WTC11 (cell line): ENCODE measurements at regions of chr11 and their contacts with region 1.

Region 1: GRCh38 chr11:77547863-77548551 is 41.7 kb upstream of the AQP11 start:
- DNase-seq: peak; percentile 40
- ATAC-seq: peak; percentile 98
- H3K4me3 Mint-ChIP-seq: peak overlapping the region; percentile 47
- H3K27ac Mint-ChIP-seq: peak overlapping the region; percentile 98
- H3K4me1 Mint-ChIP-seq: peaks cover 20% of the 10 kb centered on the region
- H3K27me3 Mint-ChIP-seq: no peaks in the 10 kb centered on the region
- CTCF ChIP-seq: peak; percentile 48

Region 2: DNA sequence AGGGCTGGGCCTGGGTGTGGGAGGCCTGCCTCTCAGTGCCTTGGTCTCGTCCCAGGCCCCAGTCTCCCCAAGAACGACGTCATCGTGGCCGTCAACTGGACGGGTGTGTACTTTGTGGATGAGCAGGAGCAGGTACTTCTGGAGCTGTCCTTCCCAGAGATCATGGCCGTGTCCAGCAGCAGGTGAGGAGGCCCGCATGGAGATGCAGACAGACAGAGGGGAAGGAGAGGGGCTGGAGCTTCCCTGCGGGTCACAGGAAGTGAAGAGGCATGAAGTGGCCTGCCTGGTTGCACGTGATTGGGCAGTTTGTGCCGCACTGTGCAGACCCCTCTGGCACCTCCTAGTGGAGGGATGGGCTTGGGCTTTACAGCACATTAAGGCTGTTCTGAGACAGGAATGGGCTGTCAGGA is 349.6 kb before region 1 on chr11:
- CTCF ChIA-PET with region 1: interaction called, 14 read pairs
- POLR2A ChIA-PET with region 1: no interaction called
- DNase-seq: peak; percentile 82
- ATAC-seq: peak; percentile 90
- H3K4me3 Mint-ChIP-seq: no peak overlapping the region
- H3K27ac Mint-ChIP-seq: 0 out of 2 replicates have a peak overlapping the region, but pooled peaks have one; percentile 47
- H3K4me1 Mint-ChIP-seq: peaks cover 5% of the 10 kb centered on the region
- H3K27me3 Mint-ChIP-seq: no peaks in the 10 kb centered on the region
- CTCF ChIP-seq: peak; percentile 39

Region 3: DNA sequence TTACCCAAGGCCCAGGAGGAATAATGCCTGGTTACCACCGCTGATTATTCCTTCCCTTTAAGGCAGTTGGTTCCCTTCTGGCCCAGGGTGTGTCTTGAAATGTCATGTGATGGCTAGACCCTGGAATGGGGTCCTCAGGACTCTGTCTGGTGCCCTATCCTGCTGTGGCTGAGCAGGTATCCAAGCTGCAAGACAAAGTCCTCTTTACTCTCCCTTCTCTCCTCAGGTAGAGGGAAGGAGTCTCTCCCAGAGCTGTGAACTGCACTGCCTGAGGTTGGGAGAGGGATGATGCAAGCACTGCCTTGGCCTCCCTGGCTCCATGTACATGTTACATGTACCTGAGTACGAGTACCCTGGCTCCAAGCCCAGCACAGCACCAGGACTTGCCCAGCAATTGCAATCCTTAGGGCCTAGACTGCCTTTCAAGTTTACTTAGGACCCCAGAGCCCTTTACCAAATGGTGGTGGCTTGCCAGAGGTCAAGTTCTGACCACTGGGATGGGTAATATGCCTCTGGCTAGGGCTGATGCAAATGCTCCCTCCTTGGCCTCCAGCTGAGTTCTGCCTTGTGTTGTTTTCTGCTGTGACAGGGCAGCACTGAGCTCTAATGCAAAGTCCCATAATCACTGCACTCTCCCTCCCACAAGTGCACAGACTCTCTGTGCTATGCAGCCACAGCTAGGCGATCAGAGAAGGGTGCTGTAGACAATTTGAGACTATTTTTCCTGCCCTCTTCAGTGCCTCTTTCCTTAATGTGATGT is 21.1 kb after region 1 on chr11:
- CTCF ChIA-PET with region 1: no interaction called
- POLR2A ChIA-PET with region 1: no interaction called
- DNase-seq: no peak
- ATAC-seq: peak; percentile 42
- H3K4me3 Mint-ChIP-seq: no peak overlapping the region
- H3K27ac Mint-ChIP-seq: no peak overlapping the region
- H3K4me1 Mint-ChIP-seq: peaks cover 45% of the 10 kb centered on the region
- H3K27me3 Mint-ChIP-seq: no peaks in the 10 kb centered on the region; the same call in 1 of the 2 replicates
- CTCF ChIP-seq: no peak